ENCODE measurements at regions of chr2 and their contacts with region 1.

Region 1: GRCh38 chr2:123468071-123468470 is 557.0 kb upstream of the CNTNAP5 start:
- DNase-seq: no peak

Region 2: GRCh38 chr2:122323927-122324326 is 1144.1 kb before region 1 on chr2:
- intact Hi-C with region 1: no loop called
- DNase-seq: no peak

Region 3: DNA sequence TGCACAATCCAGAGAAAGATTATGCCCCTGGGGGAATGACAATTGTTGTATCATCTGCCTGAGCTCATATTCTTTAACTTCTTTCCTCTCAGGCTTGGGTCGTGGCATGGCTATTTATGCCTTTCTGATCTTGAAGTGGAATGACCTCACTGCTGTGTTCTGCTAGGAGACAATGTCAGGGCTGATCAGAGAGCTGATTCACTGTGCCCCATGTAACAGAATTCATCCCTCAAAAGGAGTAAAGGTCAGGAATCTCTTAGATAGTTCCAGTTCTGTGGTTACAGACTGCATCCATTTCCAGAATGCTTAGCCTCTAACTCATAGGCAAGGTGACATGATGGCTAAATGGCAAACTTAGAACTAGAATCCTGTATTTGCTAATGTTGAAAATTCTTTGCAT is 45.3 kb after region 1 on chr2:
- intact Hi-C with region 1: no loop called
- DNase-seq: no peak

Region 4: DNA sequence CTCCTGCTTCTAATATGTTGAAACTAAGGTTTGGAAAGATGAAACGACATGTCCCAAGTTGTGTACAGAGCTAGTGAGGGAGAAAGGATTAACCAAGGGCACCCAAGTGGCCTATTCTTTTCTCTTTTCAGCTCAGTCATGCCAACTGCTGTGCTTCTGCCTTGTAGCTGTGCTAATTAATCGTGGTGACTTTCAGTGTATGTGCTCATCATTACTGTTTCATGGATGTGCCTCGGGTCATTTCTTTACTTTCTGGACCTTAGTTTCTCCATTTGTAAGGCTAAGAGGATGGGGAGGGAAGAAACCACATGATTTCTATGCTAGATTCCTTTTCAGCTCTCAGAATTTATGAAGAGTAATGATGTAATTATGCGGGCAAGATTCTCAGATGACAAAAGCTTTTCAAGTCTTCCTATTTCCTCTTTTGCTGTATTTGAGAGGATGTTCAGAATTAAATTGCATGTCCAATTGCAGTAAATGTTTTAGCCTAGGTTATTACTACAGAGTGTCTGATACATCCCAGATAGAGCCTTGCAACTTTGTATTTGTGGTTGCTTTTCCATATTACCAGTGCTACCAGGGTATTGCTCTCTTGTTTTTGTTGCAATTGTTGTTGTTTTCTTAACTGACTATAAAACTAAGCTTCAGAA is 1178.2 kb after region 1 on chr2:
- intact Hi-C with region 1: loop called in 1 of 2 experiments (anchors 5 kb)
- DNase-seq: no peak